ENCODE measurements at regions of chr11 and their contacts with region 1.

Region 1: GRCh38 chr11:125345421-125346178 is 150.5 kb downstream of the FEZ1 start:
- DNase-seq: peak; percentile 64
- H3K4me3 ChIP-seq: no peak overlapping the region
- H3K27ac ChIP-seq: no peak overlapping the region
- H3K4me1 ChIP-seq: no peaks in the 10 kb centered on the region
- H3K27me3 ChIP-seq: no peaks in the 10 kb centered on the region
- CTCF ChIP-seq: peak; percentile 72

Region 2: DNA sequence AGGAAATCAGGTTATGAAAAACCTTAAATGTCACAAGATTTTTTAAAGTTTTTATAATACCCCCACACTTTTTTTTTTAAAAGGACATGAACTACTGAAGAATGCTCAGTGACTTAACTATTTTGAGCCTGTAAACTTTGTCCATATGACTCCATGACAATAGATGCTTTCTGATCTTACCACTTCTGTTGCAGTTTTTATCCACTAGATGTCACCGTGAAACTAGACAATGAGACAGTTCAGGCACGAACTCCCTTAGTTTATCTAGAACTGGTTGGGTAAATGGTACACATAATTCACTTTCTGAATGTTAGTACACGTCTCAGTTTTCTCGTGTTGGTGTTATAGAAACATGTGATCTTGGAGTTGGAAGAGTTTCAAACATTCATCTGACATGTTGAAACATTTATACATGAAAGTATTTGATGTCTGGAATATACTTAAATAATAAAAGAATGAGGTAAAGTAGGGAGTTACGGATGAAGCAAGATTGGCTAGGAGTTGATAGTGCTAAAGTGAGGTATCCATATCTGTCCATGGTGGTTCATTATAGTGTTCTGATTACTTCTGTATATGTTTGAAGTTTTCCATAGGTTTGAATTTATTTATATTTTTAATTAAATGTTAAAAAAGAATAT is 383.5 kb before region 1 on chr11:
- intact Hi-C with region 1: loop called (anchors 5 kb)
- DNase-seq: peak; percentile 23
- H3K4me3 ChIP-seq: no peak overlapping the region
- H3K27ac ChIP-seq: no peak overlapping the region
- H3K4me1 ChIP-seq: no peaks in the 10 kb centered on the region
- H3K27me3 ChIP-seq: no peaks in the 10 kb centered on the region
- CTCF ChIP-seq: peak; percentile 62

Region 3: GRCh38 chr11:125091247-125091876 is 254.2 kb before region 1 on chr11:
- intact Hi-C with region 1: loop called (anchors 10 kb)
- DNase-seq: peak; percentile 16
- H3K4me3 ChIP-seq: no peak overlapping the region
- H3K27ac ChIP-seq: no peak overlapping the region
- H3K4me1 ChIP-seq: no peaks in the 10 kb centered on the region
- H3K27me3 ChIP-seq: no peaks in the 10 kb centered on the region
- CTCF ChIP-seq: peak; percentile 35

Region 4: DNA sequence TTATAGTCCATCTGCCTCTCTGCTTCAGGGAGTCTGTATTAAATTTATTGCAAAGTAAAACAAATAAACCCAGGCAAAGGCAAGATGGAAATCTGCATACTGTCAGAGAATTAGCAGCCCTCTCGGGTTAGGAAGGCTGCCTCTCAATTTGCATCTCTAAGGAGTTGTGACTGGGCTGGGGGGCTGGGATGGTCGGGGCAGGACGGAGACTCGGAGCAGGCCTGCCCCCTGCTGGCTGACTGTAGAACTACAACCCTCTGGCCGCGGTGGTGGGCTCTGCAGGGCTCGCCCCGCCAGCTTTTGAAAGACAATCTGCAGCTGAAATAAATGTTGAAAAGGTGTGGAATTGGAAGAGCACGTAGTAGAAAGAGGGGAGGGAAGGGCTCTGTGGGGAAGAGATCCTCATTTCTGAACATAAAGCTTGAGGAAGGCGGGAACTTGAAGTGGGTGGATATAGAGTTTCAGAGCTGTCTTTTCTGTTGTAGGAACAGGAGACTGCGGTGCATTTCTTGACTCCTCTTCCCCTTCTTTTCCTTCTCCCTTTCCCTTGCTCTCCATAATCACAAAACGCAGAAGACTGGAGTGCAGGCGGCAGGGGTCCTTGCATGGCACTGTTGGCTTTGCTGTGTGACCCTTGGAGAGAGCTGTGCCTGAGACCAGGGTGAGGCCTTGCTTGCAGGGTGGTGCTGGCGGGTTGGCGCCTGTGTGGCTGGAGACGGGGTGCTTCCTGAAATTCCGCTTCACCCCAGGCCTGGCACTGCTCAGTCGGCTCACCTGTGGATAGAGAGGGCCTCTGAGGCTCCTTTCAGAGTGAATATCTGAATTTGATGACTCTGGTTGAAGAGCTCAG is 203.7 kb before region 1 on chr11:
- intact Hi-C with region 1: loop called (anchors 5 kb)
- DNase-seq: no peak
- H3K4me3 ChIP-seq: no peak overlapping the region
- H3K27ac ChIP-seq: no peak overlapping the region
- H3K4me1 ChIP-seq: no peaks in the 10 kb centered on the region
- H3K27me3 ChIP-seq: no peaks in the 10 kb centered on the region
- CTCF ChIP-seq: peak; percentile 97

Region 5: DNA sequence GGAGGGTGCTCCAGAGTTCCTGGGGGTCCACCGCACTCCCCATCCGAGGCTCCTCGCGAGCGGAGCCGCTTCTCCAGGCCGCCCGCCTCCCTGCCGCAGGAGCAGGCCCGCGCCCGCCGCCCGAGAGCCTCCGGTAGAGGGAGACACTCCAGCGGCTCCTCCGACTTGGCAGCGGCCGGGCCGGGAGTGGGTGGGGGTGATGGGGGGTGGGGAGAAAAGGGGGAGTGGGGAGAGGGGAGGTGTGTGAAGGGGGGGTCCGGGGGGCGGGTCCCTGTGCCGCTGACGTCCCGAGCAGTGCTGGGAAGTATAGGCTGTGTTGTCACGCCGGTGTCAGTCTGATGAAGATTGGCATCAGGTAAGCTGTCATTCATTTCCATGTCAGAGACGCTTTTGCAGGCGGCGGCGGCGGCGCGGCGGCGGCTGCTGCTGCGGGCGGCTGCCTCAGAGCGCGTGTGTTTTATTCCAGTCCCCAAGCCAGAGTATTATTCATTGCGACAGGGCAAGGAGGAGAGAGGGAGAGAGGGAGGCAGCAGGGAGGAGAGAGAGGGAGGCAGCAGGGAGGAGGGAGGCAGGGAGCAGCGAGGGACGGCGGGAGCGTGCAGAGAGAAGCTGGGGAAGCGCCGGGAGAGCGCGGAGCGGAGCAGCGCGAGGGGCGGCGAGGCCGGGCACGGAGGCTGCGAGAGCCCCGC is 181.0 kb before region 1 on chr11 and contains the start of gene PKNOX2:
- intact Hi-C with region 1: loop called (anchors 5 kb)
- DNase-seq: peak; percentile 65
- H3K4me3 ChIP-seq: peak within 1 kb of the TSS; percentile 49
- H3K27ac ChIP-seq: peak within 1 kb of the TSS; percentile 44
- H3K4me1 ChIP-seq: no peaks in the 10 kb centered on the region
- H3K27me3 ChIP-seq: peaks cover 33% of the 10 kb centered on the region
- CTCF ChIP-seq: peak; percentile 35
- total RNA-seq, gene PKNOX2: 0.52 to 1.3 TPM

Region 6: GRCh38 chr11:125514336-125515101 is 168.9 kb after region 1 on chr11:
- intact Hi-C with region 1: no loop called
- DNase-seq: peak; percentile 54
- H3K4me3 ChIP-seq: no peak overlapping the region
- H3K27ac ChIP-seq: peak overlapping the region; percentile 57
- H3K4me1 ChIP-seq: peaks cover 4% of the 10 kb centered on the region
- H3K27me3 ChIP-seq: no peaks in the 10 kb centered on the region
- CTCF ChIP-seq: no peak

Measured in colonic mucosa (tissue), 4 donors.